Activated T-helper 2 cell treated with anti-CD3 and anti-CD28 coated beads, Interferon-gamma antibody, Interleukin-2, Interleukin-4, amounts not matched to agents 10 μg/mL and 5 μg/mL and 100 μg/mL, durations not matched to agents 14 hours and 24 hours and 36 hours (primary cell): ENCODE measurements at regions of chr1 and their contacts with region 1.

Region 1: DNA sequence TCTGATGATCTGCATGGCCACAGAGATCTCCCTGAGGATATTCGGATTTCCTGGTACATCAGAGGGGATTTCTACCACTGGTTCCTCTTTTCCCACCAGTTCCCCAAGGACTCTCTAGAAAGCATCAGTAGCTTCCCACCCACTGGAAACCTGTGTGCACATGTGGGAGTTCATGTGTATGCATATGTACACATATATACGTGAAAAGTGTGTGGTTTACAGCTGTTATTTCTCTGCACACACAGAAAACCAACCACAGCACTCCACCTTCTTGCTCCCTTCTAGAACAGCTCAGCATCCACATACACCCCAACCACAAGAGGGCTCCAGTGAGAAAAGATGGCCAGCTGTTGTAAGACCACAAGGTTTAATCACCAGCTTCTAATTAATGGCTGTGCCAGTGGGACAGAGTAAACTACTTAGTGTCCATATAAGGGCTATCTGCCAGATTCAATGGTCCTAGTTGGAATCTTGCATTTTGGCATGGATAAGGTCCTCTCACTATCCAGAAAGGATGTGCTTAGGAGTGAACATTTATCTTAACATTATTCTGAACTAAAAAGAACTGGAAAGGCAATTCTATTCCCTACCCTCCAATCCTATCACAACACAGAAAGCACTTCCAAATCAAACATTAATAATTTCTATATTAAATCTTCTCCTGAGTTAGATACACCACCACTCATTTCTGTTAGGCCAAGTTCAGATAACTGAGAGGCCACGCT is 24.1 kb downstream of the GPR3 start:
- DNase-seq: peak; percentile 53
- H3K4me3 Mint-ChIP-seq: no peak overlapping the region
- H3K27ac Mint-ChIP-seq: peak overlapping the region; percentile 55
- H3K4me1 Mint-ChIP-seq: peaks cover 37% of the 10 kb centered on the region
- H3K27me3 Mint-ChIP-seq: no peaks in the 10 kb centered on the region

Region 2: DNA sequence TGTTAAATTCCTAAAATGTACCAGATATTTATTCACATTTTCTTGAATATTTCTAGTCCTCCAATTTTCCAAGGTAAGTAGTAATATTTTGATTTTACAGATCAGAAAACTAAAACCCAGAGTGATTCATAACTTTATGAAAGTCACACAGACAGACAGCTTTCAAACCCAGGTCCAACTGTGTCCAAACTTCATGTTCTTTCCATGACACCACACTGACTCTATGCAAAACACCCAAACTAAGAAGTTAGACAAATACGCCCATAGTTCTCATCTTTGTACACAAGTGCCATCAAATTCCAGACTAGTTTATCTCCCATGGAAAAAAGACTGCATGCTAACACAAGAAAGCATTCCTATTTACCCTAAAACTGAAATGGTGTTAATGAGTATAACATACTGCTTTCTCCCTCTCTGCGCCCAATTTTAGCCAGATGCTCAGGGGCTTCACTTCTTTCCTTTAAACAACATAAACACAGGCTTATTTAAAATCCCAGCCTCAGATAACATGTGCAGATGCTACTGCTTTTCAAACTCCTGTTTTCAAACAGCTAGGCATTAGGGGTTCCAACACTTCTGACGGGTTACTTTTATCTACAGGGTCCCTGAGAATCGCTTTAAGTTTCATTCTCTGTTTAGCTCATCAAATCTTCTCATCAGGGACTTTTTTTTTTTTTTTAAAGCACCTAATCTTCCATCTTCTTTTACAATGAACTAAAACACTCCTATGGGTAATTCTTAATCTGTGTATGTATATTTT is 28.8 kb after region 1 on chr1:
- intact Hi-C with region 1: loop called (anchors 1 kb)
- DNase-seq: no peak
- H3K4me3 Mint-ChIP-seq: peak overlapping the region; percentile 67
- H3K27ac Mint-ChIP-seq: peak overlapping the region; percentile 96
- H3K4me1 Mint-ChIP-seq: peaks cover 52% of the 10 kb centered on the region
- H3K27me3 Mint-ChIP-seq: no peaks in the 10 kb centered on the region

Region 3: DNA sequence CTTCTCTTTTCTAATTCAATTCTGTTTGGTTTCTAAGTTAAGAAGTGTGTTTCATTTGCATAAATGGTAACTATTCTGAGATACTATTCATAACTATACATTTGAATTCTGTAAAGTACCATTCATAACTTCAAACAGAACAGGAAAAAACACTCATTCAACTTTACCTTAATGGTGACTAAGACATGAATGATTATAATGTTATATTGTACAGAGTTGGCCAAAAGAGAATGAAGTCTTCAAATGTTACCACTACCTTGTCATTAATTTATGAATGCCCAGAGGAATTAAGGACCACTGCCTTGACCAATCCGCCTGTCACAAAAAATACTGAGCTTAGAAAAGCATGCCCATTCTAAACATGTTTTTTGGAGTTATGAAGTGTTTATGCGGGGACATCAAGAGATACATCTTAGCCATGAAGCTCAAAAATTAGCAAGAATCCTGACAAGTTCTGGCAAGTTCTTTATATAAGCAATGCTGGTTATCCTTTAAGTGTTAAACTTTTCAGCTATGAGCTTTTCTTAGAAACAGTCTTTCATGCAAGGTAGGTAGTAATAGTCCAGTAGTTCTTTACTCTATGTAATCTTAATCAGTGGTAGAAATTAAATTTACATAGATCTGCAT is 65.6 kb after region 1 on chr1:
- intact Hi-C with region 1: loop called (anchors 2 kb)
- DNase-seq: no peak
- H3K4me3 Mint-ChIP-seq: no peak overlapping the region
- H3K27ac Mint-ChIP-seq: peak overlapping the region; percentile 75
- H3K4me1 Mint-ChIP-seq: peaks cover 26% of the 10 kb centered on the region
- H3K27me3 Mint-ChIP-seq: no peaks in the 10 kb centered on the region

Region 4: DNA sequence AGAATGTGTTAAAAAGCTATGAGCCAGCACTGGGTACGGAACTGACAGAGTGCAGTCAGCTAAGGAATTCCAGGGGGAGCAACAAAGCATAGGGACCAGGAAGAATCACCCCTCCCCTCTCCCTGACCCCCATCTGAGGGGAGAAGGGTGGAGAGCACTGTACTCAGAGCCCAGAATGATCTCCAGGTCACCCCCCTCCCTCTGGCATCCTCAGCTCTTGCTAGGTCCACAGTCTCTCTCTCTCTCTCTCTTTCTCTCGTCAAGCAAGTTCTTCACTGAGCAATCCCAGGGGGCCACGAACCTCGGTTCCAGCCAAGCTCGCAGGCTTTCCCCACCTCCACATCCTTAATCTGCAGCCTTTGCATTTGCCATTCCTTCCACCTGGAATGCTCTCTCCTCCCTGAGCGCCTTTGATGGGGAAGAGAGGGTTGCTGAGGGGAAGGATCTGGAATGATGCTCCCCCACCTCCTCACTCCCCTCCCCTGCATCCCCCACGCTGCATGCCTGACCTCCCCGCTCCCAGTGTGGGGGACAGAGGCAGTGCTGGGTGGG is 80.1 kb after region 1 on chr1:
- intact Hi-C with region 1: no loop called
- DNase-seq: no peak
- H3K4me3 Mint-ChIP-seq: no peak overlapping the region
- H3K27ac Mint-ChIP-seq: no peak overlapping the region
- H3K4me1 Mint-ChIP-seq: peaks cover 6% of the 10 kb centered on the region
- H3K27me3 Mint-ChIP-seq: peaks cover 1% of the 10 kb centered on the region